ENCODE measurements at regions of chr11 and their contacts with region 1.

Region 1: DNA sequence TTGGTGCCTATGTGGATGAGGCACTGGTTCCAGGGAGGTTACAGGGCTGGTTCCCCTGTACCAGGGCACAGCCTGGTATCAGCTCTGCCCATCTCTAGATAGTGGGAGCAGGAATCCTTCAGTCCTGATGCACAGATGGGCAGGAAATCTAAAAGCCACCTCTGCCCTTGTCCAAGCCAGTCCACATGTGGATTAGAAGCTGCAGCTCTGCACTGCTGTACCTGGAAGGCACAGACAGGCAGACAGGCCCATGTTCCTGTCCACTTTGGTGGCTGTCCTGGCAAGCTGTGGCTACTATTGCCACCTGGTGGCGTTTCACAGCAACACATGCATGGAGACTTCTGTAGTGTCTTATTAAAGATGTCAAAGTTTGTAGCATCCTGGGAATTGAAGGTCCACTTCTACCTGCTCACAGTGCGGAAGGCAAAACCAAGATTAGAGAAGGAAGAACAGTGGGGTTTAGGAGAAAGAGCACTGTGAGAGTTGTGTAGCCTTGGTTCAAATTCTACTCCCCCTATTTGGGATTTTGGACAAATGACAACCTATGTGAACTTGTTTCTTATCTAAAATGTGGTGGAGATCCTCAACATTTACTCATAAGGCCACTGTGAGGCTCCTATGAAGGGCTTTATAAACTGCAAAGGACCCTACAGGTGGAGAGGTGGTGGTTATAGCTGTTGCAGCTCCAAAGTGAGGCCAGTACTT is 30.1 kb downstream of the NAV2 start:
- DNase-seq: peak; percentile 79 to 87
- H3K4me3 ChIP-seq: no peak overlapping the region
- H3K27ac ChIP-seq: peak overlapping the region; percentile 3 to 37
- H3K4me1 ChIP-seq: peaks cover 3 to 66% (median 30%) of the 10 kb centered on the region in 4 donors
- H3K27me3 ChIP-seq: no peaks in the 10 kb centered on the region
- CTCF ChIP-seq: peak; percentile 84 to 91

Region 2: GRCh38 chr11:19903620-19904069 is 160.9 kb after region 1 on chr11:
- intact Hi-C with region 1: loop called (anchors 10 kb)
- DNase-seq: peak; percentile 80 to 82
- H3K4me3 ChIP-seq: no peak overlapping the region
- H3K27ac ChIP-seq: peak overlapping the region; percentile 2 to 49
- H3K4me1 ChIP-seq: peaks cover 0 to 69% (median 23%) of the 10 kb centered on the region in 4 donors
- H3K27me3 ChIP-seq: no peaks in the 10 kb centered on the region
- CTCF ChIP-seq: peak; percentile 74 to 82